Activated naive CD4-positive, alpha-beta T cell treated with anti-CD3 and anti-CD28 coated beads, Interleukin-2, amount 10 ng/mL, durations not matched to agents 7 days and 5 days (primary cell): ENCODE measurements at regions of chr12 and their contacts with region 1.

Region 1: GRCh38 chr12:1117970-1118563 is 127.0 kb downstream of the ERC1 start:
- DNase-seq: peak; percentile 81
- H3K4me3 Mint-ChIP-seq: no peak overlapping the region
- H3K27ac Mint-ChIP-seq: no peak overlapping the region
- H3K4me1 Mint-ChIP-seq: peaks cover 7% of the 10 kb centered on the region
- H3K27me3 Mint-ChIP-seq: no peaks in the 10 kb centered on the region

Region 2: GRCh38 chr12:1157046-1157445 is 39.0 kb after region 1 on chr12:
- CTCF ChIA-PET with region 1: no interaction called
- DNase-seq: no peak
- H3K4me3 Mint-ChIP-seq: no peak overlapping the region
- H3K27ac Mint-ChIP-seq: no peak overlapping the region
- H3K4me1 Mint-ChIP-seq: no peaks in the 10 kb centered on the region
- H3K27me3 Mint-ChIP-seq: no peaks in the 10 kb centered on the region

Region 3: DNA sequence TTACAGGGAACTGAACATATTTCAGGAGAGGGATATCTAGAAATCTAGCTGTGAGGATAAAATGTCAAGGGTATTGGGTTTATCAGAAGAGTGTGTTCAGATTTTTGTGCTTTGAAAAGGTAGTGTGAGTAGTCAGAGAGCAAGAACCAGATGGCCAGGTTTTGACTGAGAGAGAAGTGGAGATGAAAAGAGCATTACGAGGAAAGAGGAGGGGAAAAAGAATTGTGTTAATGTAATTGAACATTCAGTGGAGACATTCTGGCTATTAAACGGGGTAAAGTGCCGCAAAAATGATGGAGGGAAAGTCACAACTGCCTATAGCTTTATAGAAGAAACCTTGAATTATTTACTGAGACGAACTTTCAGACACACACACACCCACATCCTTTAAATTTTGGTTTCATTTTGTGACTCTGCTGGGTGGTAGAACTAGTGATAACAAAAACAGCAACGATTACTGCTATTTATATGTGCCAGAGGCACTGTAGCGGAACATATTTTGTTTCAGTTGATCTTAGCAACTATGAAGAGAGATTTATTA is 86.6 kb after region 1 on chr12:
- CTCF ChIA-PET with region 1: interaction called, 13 read pairs
- DNase-seq: no peak
- H3K4me3 Mint-ChIP-seq: no peak overlapping the region
- H3K27ac Mint-ChIP-seq: no peak overlapping the region
- H3K4me1 Mint-ChIP-seq: peaks cover 15% of the 10 kb centered on the region
- H3K27me3 Mint-ChIP-seq: no peaks in the 10 kb centered on the region

Region 4: DNA sequence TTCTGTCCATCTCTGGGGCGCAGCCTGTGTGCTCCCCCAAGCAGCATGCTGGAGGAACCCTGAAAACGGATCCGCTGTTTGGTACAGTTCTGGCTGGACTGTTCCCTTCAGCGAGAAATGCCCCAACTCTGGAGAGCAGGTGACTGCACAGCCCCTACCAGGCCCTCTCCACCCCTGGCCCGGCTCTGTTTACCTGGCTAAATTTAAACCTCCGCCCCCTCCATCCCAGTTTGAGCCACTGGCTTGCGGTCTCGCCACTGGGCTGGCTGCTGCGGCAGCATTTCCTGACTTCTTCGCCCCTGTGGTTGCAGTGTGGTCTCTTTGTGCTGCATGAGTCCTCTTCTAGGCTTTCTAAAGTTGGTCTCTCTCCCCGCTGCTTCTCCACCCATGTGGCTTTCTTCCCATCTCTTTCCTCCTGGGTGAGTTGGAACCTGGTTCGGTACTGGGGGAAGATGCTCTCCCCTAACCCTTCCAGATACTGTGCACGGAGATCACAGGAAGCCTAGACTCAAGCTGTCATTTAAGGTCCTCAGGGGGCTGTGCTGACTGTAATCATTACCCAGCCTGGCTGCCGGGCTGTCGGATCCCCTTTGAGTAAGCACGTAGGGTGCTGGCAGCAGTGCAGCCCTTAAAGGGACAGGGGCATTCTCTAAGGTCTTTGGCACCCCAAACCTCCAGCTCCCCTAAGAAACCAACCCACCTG is 415.7 kb after region 1 on chr12:
- CTCF ChIA-PET with region 1: interaction called, 17 read pairs
- DNase-seq: peak; percentile 62
- H3K4me3 Mint-ChIP-seq: peak overlapping the region; percentile 37
- H3K27ac Mint-ChIP-seq: no peak overlapping the region
- H3K4me1 Mint-ChIP-seq: peaks cover 32% of the 10 kb centered on the region
- H3K27me3 Mint-ChIP-seq: peaks cover 91% of the 10 kb centered on the region

Region 5: GRCh38 chr12:1594261-1595025 is 476.4 kb after region 1 on chr12 and contains the start of gene FBXL14:
- CTCF ChIA-PET with region 1: interaction called, 27 read pairs
- DNase-seq: peak; percentile 94
- H3K4me3 Mint-ChIP-seq: peak within 1 kb of the TSS; percentile 97
- H3K27ac Mint-ChIP-seq: peak within 1 kb of the TSS; percentile 94
- H3K4me1 Mint-ChIP-seq: peaks cover 50% of the 10 kb centered on the region
- H3K27me3 Mint-ChIP-seq: no peaks in the 10 kb centered on the region